K562 (cell line): ENCODE measurements at regions of chr15 and their contacts with region 1.

Region 1: GRCh38 chr15:94119923-94120775 is 111.2 kb upstream of the MCTP2 start:
- DNase-seq: peak; percentile 25 to 53 (median 36)
- ATAC-seq: peak; percentile 81
- H3K4me3 ChIP-seq: no peak overlapping the region
- H3K27ac ChIP-seq: no peak overlapping the region
- H3K4me1 ChIP-seq: no peaks in the 10 kb centered on the region
- H3K27me3 ChIP-seq: no peaks in the 10 kb centered on the region
- CTCF ChIP-seq: peak; percentile 72 to 98 (median 97)
- EP300 ChIP-seq: no peak
- POLR2A ChIP-seq: no peak
- RAD21 ChIP-seq: peak; percentile 93 to 97

Region 2: DNA sequence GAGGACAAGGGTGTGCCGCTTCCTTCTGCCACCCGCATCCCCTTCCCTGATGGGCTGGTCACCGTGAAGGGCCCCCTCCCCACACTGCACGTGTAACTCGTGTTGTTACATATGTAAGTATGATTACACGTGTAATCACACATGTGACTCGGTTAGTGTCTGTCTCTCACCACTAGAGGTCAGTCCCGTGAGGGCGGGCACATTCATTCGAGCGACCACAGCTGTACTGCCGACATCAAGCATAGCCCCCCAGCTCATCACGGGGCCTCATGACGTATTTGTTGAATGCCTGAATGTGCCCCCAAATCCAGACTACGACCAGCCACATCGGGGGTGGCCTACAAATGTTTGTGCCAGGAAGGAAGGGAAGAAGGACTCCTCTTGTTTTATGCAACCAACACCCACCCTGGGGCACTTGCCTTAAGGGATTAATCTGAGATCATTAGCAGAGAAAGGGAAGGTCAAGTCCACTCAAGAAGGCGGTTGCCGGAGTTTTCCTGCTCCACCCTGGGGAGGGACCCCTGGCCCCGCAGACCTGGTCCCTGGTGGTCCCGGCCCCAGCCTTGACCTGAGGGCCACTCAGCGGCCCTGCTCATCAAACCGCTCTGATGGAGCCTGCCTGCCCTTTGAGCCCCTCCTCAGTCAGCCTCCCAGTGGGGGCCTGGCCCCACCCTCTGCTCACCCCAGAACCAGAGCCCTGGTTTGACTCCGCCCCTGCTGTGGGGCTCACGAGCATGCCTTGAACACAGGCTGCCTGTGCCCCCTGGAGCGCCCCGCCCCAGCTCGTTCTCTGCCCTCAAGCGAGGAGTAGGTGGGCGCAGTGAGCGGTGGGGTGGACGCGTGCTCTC is 1084.0 kb before region 1 on chr15:
- CTCF ChIA-PET with region 1: interaction called, 24 read pairs
- POLR2A ChIA-PET with region 1: interaction called, 3 read pairs
- in situ Hi-C with region 1: loop called (anchors 5 kb)
- intact Hi-C with region 1: no loop called
- DNase-seq: peak; percentile 62 to 77 (median 74)
- ATAC-seq: peak; percentile 83
- H3K4me3 ChIP-seq: no peak overlapping the region
- H3K27ac ChIP-seq: no peak overlapping the region
- H3K4me1 ChIP-seq: peaks cover 10 to 26% of the 10 kb centered on the region in 2 experiments; a peak in 4 of 5 replicates
- H3K27me3 ChIP-seq: peaks cover 9 to 36% of the 10 kb centered on the region in 2 experiments
- CTCF ChIP-seq: peak; percentile 62 to 85 (median 63)
- EP300 ChIP-seq: no peak
- POLR2A ChIP-seq: no peak
- RAD21 ChIP-seq: peak; percentile 9 to 53; a peak in 2 of 4 replicates